ENCODE measurements at regions of chr14 and their contacts with region 1.

Region 1: DNA sequence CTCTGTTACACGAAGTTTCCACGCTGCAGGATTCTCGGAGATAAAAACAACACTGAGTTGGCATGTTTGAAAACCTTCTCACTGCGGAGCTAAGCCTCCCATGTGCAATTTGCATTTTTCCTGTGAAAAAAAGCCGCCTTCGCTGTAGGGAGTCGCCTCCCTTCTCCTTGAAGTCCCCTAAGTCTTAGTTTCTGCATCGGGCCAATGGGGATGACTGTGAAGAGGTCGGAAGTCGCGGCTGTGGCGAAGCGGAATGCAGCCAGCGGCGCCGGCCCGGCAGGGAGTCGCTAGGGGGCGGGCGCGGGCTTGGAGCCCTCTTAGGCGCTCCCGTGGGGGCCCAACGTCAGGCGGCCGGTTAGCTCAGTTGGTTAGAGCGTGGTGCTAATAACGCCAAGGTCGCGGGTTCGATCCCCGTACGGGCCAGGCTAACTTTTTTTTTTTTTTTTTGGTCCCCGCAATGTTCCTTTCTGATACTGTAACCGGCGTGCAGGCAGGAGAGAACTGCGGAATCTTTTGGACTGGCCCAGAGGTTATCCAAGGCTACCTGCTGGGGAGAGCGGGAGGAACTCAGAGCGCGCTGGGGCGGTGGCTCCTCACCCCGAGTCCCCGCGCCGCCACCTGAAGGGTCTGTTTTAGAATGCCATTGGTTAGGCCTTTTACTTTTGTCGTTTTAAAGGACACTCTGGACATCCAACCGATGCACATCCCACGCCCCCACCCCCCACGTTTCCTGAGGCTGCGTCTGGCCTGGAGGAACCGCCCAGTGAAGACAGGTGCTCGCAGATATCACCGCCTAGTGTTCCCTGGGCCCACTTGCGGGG is 2.6 kb upstream of the ZNF839 start:
- DNase-seq: peak; percentile 93 to 97
- H3K4me3 ChIP-seq: peak overlapping the region; percentile 40 to 67 (median 59)
- H3K27ac ChIP-seq: peak overlapping the region; percentile 96 to 97
- H3K4me1 ChIP-seq: peaks cover 6 to 7% of the 10 kb centered on the region in 2 donors
- H3K27me3 ChIP-seq: no peaks in the 10 kb centered on the region
- CTCF ChIP-seq: peak; percentile 52 to 91 (median 87)
- POLR2A ChIP-seq: no peak

Region 2: DNA sequence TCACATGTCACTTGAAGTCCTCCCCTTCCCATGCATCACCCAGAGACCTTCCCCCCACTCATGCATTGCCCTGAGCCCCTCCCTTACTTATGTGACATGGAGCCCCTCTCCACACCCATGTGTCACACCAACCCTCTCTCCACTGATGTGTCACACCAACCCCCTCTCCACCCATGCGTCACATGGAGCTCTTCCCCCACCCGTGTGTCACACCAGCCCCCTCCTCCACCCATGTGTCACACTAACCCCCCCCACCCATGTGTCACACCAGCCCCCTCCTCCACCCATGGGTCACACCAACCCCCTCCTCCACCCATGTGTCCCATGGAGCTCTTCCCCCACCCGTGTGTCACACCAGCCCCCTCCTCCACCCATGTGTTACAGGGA is 1443.9 kb before region 1 on chr14:
- intact Hi-C with region 1: no loop called
- DNase-seq: peak in 1 of 2 donors; percentile 15
- H3K4me3 ChIP-seq: no peak overlapping the region
- H3K27ac ChIP-seq: no peak overlapping the region
- H3K4me1 ChIP-seq: no peaks in the 10 kb centered on the region
- H3K27me3 ChIP-seq: peaks cover 0 to 20% of the 10 kb centered on the region in 2 donors
- CTCF ChIP-seq: no peak
- POLR2A ChIP-seq: no peak

Region 3: DNA sequence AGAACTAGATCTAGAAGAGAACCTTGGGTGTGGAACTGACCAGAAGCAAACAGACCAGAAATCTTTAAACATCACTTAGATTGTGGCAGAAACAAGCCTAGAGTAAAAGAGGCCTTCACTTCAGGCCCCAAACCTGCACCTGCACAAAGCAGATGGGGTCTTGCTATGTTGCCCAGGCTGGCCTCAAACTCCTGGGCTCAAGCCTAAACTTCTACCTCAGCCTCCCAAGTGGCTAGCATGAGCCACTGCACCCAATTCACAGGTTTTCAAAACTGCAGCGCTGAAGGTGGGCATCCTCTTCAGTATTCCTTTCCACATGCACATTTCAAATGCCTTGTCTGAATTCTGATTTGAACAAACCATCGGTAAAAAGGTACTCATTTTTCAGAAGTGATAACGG is 31.8 kb before region 1 on chr14:
- intact Hi-C with region 1: no loop called
- DNase-seq: no peak
- H3K4me3 ChIP-seq: no peak overlapping the region
- H3K27ac ChIP-seq: no peak overlapping the region
- H3K4me1 ChIP-seq: no peaks in the 10 kb centered on the region
- H3K27me3 ChIP-seq: no peaks in the 10 kb centered on the region
- CTCF ChIP-seq: no peak
- POLR2A ChIP-seq: no peak

Region 4: GRCh38 chr14:102509744-102510615 is 193.0 kb after region 1 on chr14 and contains the start of gene ANKRD9:
- intact Hi-C with region 1: loop called (anchors 10 kb)
- DNase-seq: peak; percentile 91 to 94
- H3K4me3 ChIP-seq: peak within 1 kb of the TSS; percentile 53 to 80 (median 68)
- H3K27ac ChIP-seq: peak within 1 kb of the TSS; percentile 87 to 92
- H3K4me1 ChIP-seq: peaks cover 2 to 4% of the 10 kb centered on the region in 2 donors
- H3K27me3 ChIP-seq: no peaks in the 10 kb centered on the region
- CTCF ChIP-seq: no peak
- POLR2A ChIP-seq: no peak
- total RNA-seq, gene ANKRD9: 10.4 to 24.9 (median 22.8) TPM

Measured in breast epithelium (tissue), 4 donors.